Activated CD4-positive, alpha-beta memory T cell treated with anti-CD3 and anti-CD28 coated beads for 36 hours (primary cell): ENCODE measurements at regions of chr20 and their contacts with region 1.

Region 1: GRCh38 chr20:1734269-1734858 is 76.8 kb upstream of the SIRPG start:
- DNase-seq: peak; percentile 46
- H3K4me3 Mint-ChIP-seq: no peak overlapping the region
- H3K27ac Mint-ChIP-seq: no peak overlapping the region
- H3K4me1 Mint-ChIP-seq: peaks cover 34% of the 10 kb centered on the region
- H3K27me3 Mint-ChIP-seq: peaks cover 2% of the 10 kb centered on the region

Region 2: DNA sequence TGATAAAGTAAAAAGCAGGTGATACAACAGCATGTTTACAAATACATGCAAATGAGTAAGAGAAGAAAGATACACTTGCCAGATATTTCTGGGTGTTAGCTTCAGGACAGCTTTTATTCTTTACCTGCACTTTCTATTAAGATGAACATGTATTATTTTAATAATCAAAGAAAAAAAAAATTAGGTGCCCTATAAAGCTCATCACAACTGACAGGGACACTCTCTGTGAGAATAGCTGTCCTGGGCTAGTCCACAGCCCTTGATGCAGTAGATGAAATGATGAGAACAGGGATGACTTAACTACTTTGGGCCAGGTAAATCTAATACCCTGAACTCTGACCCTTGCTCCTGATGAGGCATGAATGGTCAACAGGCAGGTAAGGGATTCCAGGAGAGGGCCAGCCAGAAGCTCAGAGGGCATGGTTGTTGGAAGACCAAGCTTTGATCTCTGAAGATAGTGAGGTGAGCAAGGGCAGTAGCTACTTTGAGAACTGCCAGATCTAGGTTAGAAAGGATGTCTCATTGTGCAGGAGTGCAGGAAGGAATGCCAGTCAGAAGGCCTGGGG is 283.4 kb before region 1 on chr20:
- CTCF ChIA-PET with region 1: no interaction called
- POLR2A ChIA-PET with region 1: no interaction called
- intact Hi-C with region 1: no loop called
- DNase-seq: no peak
- H3K4me3 Mint-ChIP-seq: no peak overlapping the region
- H3K27ac Mint-ChIP-seq: no peak overlapping the region
- H3K4me1 Mint-ChIP-seq: no peaks in the 10 kb centered on the region
- H3K27me3 Mint-ChIP-seq: no peaks in the 10 kb centered on the region

Region 3: GRCh38 chr20:1503564-1504227 is 230.7 kb before region 1 on chr20:
- CTCF ChIA-PET with region 1: interaction called, 17 read pairs
- POLR2A ChIA-PET with region 1: no interaction called
- intact Hi-C with region 1: loop called (anchors 2 kb)
- DNase-seq: peak; percentile 83
- H3K4me3 Mint-ChIP-seq: no peak overlapping the region
- H3K27ac Mint-ChIP-seq: no peak overlapping the region
- H3K4me1 Mint-ChIP-seq: peaks cover 3% of the 10 kb centered on the region
- H3K27me3 Mint-ChIP-seq: peaks cover 17% of the 10 kb centered on the region

Region 4: GRCh38 chr20:1533059-1533458 is 201.3 kb before region 1 on chr20:
- CTCF ChIA-PET with region 1: interaction called, 12 read pairs
- POLR2A ChIA-PET with region 1: no interaction called
- intact Hi-C with region 1: loop called (anchors 1 kb)
- DNase-seq: no peak
- H3K4me3 Mint-ChIP-seq: no peak overlapping the region
- H3K27ac Mint-ChIP-seq: no peak overlapping the region
- H3K4me1 Mint-ChIP-seq: peaks cover 3% of the 10 kb centered on the region
- H3K27me3 Mint-ChIP-seq: peaks cover 4% of the 10 kb centered on the region

Region 5: DNA sequence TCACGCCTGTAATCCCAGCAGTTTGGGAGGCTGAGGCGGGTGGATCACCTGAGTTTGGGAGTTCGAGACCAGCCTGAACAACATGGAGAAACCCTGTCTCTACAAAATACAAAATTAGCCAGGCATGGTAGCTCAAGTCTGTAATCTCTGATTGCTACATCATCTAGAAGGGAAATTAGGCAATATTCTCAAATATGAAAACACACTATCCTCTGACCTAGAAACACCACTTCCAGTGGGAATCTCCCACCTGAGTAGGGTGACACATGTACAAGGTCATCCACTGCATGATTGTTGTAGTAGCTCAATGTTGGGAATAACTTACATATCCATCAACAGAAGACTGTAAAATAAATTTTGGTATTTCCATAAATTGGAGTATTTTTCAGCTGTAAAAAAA is 157.7 kb before region 1 on chr20:
- CTCF ChIA-PET with region 1: interaction called, 3 read pairs
- POLR2A ChIA-PET with region 1: no interaction called
- intact Hi-C with region 1: loop called (anchors 2 kb)
- DNase-seq: no peak
- H3K4me3 Mint-ChIP-seq: no peak overlapping the region
- H3K27ac Mint-ChIP-seq: no peak overlapping the region
- H3K4me1 Mint-ChIP-seq: no peaks in the 10 kb centered on the region
- H3K27me3 Mint-ChIP-seq: no peaks in the 10 kb centered on the region

Region 6: DNA sequence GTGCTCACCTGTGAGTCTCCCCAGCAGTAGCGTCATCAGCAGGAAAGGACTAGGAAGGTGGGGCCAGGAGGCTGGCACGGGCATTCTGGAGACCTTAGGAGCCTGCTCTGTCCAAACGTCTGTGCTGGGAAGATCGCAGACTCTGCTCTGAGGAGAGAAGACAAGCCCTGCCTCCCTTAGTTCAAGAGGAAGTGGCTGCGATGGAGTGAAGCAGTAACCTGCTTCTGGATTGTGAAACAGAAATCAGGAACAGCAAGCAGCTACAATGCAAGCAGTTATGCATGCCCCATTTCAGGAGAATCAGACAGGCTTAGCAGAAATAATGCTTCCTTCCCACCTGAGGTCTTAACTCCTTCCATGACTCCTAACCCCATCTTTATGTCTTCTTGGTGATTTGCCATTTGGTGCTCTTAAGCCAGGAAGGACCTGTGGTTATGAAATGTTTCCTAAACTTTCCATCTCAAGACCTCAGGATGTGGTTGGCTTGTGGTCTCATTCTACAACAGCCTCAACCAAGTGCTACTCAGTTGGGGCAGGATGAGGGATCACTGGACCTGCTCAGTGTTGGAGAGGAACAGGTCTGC is 114.4 kb before region 1 on chr20 and contains the start of gene SIRPB1:
- CTCF ChIA-PET with region 1: interaction called, 7 read pairs
- POLR2A ChIA-PET with region 1: no interaction called
- intact Hi-C with region 1: loop called (anchors 2 kb)
- DNase-seq: peak; percentile 30
- H3K4me3 Mint-ChIP-seq: no peak within 1 kb of the TSS
- H3K27ac Mint-ChIP-seq: no peak within 1 kb of the TSS
- H3K4me1 Mint-ChIP-seq: peaks cover 53% of the 10 kb centered on the region
- H3K27me3 Mint-ChIP-seq: no peaks in the 10 kb centered on the region
- total RNA-seq, gene SIRPB1: 1.3 to 2.0 TPM

Region 7: DNA sequence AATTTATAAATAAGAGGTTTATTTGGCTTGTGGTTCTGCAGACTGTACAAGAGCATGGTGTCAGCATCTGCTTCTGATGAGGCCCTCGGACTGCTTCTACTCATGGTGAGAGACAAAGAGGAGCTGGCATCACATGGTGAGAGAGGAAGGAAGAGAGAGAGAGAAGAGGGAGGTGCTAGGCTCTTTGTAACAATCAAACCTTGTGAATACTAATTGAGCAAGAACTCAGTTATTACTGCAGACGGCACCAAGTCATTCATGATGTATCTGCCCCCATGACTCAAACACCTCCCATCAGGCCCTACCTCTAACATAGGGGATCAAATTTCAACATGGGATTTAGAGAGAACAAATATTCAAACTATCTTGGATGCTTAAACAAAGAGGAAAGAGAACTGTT is 70.4 kb before region 1 on chr20:
- CTCF ChIA-PET with region 1: interaction called, 5 read pairs
- POLR2A ChIA-PET with region 1: no interaction called
- intact Hi-C with region 1: loop called (anchors 2 kb)
- DNase-seq: peak; percentile 42
- H3K4me3 Mint-ChIP-seq: peak overlapping the region; percentile 52
- H3K27ac Mint-ChIP-seq: peak overlapping the region; percentile 93
- H3K4me1 Mint-ChIP-seq: peaks cover 94% of the 10 kb centered on the region
- H3K27me3 Mint-ChIP-seq: no peaks in the 10 kb centered on the region

Region 8: GRCh38 chr20:1764136-1765033 is 30.0 kb after region 1 on chr20:
- CTCF ChIA-PET with region 1: interaction called, 10 read pairs
- POLR2A ChIA-PET with region 1: no interaction called
- intact Hi-C with region 1: no loop called
- DNase-seq: peak; percentile 78
- H3K4me3 Mint-ChIP-seq: no peak overlapping the region
- H3K27ac Mint-ChIP-seq: no peak overlapping the region
- H3K4me1 Mint-ChIP-seq: peaks cover 3% of the 10 kb centered on the region
- H3K27me3 Mint-ChIP-seq: peaks cover 4% of the 10 kb centered on the region

Region 9: GRCh38 chr20:2402271-2402980 is 668.1 kb after region 1 on chr20:
- CTCF ChIA-PET with region 1: no interaction called
- POLR2A ChIA-PET with region 1: no interaction called
- intact Hi-C with region 1: no loop called
- DNase-seq: no peak
- H3K4me3 Mint-ChIP-seq: no peak overlapping the region
- H3K27ac Mint-ChIP-seq: no peak overlapping the region
- H3K4me1 Mint-ChIP-seq: no peaks in the 10 kb centered on the region
- H3K27me3 Mint-ChIP-seq: peaks cover 7% of the 10 kb centered on the region